A549 (cell line): ENCODE measurements at regions of chr2 and their contacts with region 1.

Region 1: GRCh38 chr2:227415538-227416424 is 28.0 kb upstream of the SCYGR1 start:
- DNase-seq: peak; percentile 47 to 78
- ATAC-seq: peak; percentile 79 to 81
- H3K4me3 ChIP-seq: no peak overlapping the region
- H3K27ac ChIP-seq: peak overlapping the region; percentile 80 to 89
- H3K4me1 ChIP-seq: peaks cover 56% of the 10 kb centered on the region
- CTCF ChIP-seq: no peak
- EP300 ChIP-seq: peak in 1 of 2 experiments; percentile 36; a peak in 1 of 5 replicates
- POLR2A ChIP-seq: no peak
- RAD21 ChIP-seq: 0 out of 5 replicates have a peak, but pooled peaks of 1 of the 2 experiments have one; percentile 10

Region 2: DNA sequence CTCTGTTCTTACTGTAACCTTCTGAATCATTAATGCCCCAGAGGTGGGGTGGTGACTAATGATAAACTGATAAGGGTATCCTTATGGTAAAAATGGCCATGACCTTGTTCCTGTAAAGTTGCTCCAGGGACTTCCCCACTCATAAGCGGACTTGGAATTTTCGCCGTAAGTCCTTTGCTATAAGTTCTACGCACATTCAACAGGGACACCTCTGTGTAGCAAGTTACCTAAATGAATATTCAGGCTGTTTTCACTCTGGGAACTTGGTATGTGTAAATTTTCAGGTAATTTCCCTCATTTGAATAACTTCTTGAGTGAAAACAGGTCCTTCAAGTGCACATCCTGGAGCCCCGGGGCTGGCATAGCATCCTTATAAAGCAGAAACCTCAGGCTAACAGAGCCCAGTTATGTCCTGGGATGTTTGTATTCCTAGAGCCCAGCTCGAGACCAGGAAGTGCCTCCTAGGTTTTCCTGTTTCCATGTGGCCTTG is 46.7 kb after region 1 on chr2:
- CTCF ChIA-PET with region 1: interaction called, 12 read pairs
- POLR2A ChIA-PET with region 1: no interaction called
- DNase-seq: no peak
- ATAC-seq: no peak
- H3K4me3 ChIP-seq: no peak overlapping the region
- H3K27ac ChIP-seq: peak overlapping the region; percentile 39 to 96; a peak in 5 of 6 replicates
- H3K4me1 ChIP-seq: peaks cover 77% of the 10 kb centered on the region
- CTCF ChIP-seq: no peak
- EP300 ChIP-seq: no peak
- POLR2A ChIP-seq: no peak
- RAD21 ChIP-seq: no peak

Region 3: DNA sequence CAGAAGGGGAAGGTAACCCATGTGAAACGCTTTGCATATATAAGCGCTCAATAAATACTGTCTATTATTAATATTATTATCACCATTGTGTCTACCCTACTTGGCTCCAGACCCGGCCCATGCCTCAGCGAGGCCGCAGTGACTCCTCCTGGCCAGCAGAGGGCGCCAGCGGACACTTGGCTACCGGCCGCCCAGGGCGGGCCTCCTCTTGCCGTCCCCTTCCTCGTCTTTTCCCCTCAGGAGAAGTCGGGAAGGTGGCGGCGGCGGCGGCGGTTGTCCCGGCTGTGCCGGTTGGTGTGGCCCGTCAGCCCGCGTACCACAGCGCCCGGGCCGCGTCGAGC is 56.1 kb after region 1 on chr2 and contains the start of gene AGFG1:
- CTCF ChIA-PET with region 1: interaction called, 15 read pairs
- POLR2A ChIA-PET with region 1: no interaction called
- DNase-seq: peak; percentile 86 to 88
- ATAC-seq: peak; percentile 73 to 74
- H3K4me3 ChIP-seq: peak within 1 kb of the TSS; percentile 89
- H3K27ac ChIP-seq: peak within 1 kb of the TSS; percentile 94 to 98
- H3K4me1 ChIP-seq: peaks cover 57% of the 10 kb centered on the region
- CTCF ChIP-seq: peak; percentile 90
- EP300 ChIP-seq: 0 out of 5 replicates have a peak, but pooled peaks of 1 of the 2 experiments have one; percentile 17
- POLR2A ChIP-seq: peak; percentile 43
- RAD21 ChIP-seq: peak; percentile 55 to 68
- polyA plus RNA-seq, gene AGFG1: 384 and 415 TPM in 2 replicates